Activated naive CD4-positive, alpha-beta T cell treated with anti-CD3 and anti-CD28 coated beads, Interleukin-2, amount 10 ng/mL, durations not matched to agents 7 days and 5 days (primary cell): ENCODE measurements at regions of chr11 and their contacts with region 1.

Region 1: GRCh38 chr11:65418711-65419459 is 3.7 kb upstream of the NEAT1 start:
- DNase-seq: peak; percentile 95
- H3K4me3 Mint-ChIP-seq: peak overlapping the region; percentile 87
- H3K27ac Mint-ChIP-seq: peak overlapping the region; percentile 97
- H3K4me1 Mint-ChIP-seq: peaks cover 49% of the 10 kb centered on the region
- H3K27me3 Mint-ChIP-seq: peaks cover 20% of the 10 kb centered on the region

Region 2: DNA sequence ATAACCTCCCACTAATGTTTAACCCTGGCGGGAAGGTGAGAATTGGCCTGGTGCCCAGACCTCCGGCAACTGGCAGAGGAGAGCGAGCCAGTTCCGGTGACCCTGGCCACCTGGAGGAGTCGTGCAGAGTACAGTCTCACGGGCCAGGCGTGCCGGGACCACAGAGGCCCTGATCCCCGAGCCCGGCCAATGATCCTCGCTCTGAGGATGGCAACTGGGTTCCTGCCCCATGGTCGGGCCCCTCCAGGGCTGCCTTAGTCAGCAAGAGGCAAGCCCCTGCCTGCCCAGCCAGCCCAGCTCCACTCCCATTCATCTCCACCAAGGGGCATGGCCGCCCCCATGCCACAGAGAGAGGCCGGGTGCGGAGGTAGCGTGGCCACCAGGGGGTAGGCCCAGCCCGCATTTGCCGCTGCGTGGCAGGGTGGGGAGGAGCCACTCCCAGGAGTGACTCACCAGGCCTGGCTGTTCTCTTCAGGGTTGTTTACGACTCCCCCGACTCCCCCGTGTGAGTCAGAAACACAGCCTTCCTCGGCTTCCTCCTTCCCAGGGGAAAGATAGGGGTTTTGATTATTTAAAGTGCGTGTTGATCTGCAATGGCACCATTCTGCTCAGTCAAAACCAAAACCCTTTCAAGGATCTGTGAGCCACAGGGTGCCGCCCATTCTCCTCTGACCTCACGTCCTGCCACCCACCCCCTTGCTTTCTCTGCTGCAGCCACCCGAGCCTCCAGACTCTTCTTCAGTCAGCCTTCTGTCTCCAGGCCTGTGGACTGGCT is 36.7 kb before region 1 on chr11 and contains the start of gene SLC25A45:
- CTCF ChIA-PET with region 1: interaction called, 14 read pairs
- DNase-seq: peak; percentile 92
- H3K4me3 Mint-ChIP-seq: peak within 1 kb of the TSS; percentile 83
- H3K27ac Mint-ChIP-seq: peak within 1 kb of the TSS; percentile 100
- H3K4me1 Mint-ChIP-seq: peaks cover 59% of the 10 kb centered on the region
- H3K27me3 Mint-ChIP-seq: no peaks in the 10 kb centered on the region

Region 3: DNA sequence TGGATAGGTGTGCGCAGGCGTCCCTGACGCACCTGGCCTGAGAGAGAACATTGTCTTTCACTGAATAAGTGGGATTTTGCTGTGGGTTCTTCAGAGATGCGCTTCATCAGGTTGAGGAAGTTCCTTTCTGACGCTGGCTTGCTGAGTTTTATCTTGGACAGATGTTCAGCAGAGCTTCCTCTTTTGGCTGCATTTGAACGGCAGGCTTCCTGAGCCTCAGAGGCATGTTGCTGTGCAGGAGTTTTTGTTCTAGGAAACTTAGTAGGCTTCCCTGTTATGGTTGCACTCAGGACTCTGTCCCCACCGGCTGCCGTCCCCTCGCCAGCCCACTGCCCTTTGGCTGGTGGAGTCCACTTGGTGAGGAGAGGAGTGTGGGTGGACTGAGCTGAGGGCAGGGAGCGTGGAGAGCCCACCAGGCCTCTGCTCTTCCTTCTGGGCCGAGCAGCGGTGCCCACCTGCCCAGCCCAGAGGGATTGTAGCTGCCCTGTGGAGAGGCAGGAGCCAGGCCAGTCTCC is 15.2 kb before region 1 on chr11:
- CTCF ChIA-PET with region 1: interaction called, 12 read pairs
- DNase-seq: no peak
- H3K4me3 Mint-ChIP-seq: no peak overlapping the region
- H3K27ac Mint-ChIP-seq: peak overlapping the region; percentile 42
- H3K4me1 Mint-ChIP-seq: peaks cover 8% of the 10 kb centered on the region
- H3K27me3 Mint-ChIP-seq: no peaks in the 10 kb centered on the region

Region 4: GRCh38 chr11:65477149-65477965 is 58.5 kb after region 1 on chr11:
- CTCF ChIA-PET with region 1: interaction called, 146 read pairs
- DNase-seq: peak; percentile 93
- H3K4me3 Mint-ChIP-seq: peak overlapping the region; percentile 95
- H3K27ac Mint-ChIP-seq: peak overlapping the region; percentile 96
- H3K4me1 Mint-ChIP-seq: peaks cover 27% of the 10 kb centered on the region
- H3K27me3 Mint-ChIP-seq: peaks cover 12% of the 10 kb centered on the region

Region 5: DNA sequence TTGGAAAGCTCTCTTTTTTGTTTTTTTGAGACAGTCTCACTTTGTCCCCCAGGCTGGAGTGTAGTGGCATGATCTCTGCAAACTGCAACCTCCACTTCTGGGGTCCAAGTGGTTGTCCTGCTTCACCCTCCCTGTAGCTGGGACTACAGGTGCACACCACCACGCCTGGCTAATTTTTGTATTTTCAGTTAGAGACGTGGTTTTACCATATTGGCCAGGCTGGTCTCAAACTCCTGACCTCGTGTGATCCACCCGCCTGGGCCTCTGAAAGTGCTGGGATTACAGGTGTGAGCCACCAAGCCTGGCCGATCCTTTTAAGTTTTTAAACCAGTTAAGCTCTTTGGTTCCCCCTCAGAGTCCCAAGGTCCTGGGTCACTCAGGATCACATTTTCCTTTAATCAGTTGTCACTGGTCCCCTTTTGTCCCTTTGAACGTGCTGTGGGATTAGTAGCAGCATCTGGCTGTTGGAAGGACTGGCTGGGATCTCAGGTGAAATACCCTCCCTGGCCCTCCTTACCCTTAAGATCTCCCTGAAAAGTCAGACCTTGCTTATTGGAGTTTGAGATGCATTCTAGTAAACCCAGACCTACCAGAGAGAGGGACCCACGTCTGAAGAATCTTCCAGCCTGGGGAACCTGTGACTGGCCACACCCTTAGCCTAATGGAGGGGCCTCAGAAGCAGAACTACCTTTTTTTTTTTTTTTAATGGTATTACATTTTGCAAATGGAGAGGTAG is 88.1 kb after region 1 on chr11:
- CTCF ChIA-PET with region 1: interaction called, 145 read pairs
- DNase-seq: peak; percentile 44
- H3K4me3 Mint-ChIP-seq: no peak overlapping the region
- H3K27ac Mint-ChIP-seq: peak overlapping the region; percentile 84
- H3K4me1 Mint-ChIP-seq: peaks cover 50% of the 10 kb centered on the region
- H3K27me3 Mint-ChIP-seq: no peaks in the 10 kb centered on the region